GM13977 (cell line): ENCODE measurements at regions of chr10 and their contacts with region 1.

Region 1: GRCh38 chr10:94279835-94280709 is 82.7 kb downstream of the NOC3L start:
- DNase-seq: peak; percentile 38
- CTCF ChIP-seq: peak; percentile 90

Region 2: GRCh38 chr10:94443047-94443446 is 163.0 kb after region 1 on chr10:
- in situ Hi-C with region 1: loop called (anchors 10 kb)
- DNase-seq: no peak
- CTCF ChIP-seq: no peak